ENCODE measurements at regions of chr2 and their contacts with region 1.

Region 1: DNA sequence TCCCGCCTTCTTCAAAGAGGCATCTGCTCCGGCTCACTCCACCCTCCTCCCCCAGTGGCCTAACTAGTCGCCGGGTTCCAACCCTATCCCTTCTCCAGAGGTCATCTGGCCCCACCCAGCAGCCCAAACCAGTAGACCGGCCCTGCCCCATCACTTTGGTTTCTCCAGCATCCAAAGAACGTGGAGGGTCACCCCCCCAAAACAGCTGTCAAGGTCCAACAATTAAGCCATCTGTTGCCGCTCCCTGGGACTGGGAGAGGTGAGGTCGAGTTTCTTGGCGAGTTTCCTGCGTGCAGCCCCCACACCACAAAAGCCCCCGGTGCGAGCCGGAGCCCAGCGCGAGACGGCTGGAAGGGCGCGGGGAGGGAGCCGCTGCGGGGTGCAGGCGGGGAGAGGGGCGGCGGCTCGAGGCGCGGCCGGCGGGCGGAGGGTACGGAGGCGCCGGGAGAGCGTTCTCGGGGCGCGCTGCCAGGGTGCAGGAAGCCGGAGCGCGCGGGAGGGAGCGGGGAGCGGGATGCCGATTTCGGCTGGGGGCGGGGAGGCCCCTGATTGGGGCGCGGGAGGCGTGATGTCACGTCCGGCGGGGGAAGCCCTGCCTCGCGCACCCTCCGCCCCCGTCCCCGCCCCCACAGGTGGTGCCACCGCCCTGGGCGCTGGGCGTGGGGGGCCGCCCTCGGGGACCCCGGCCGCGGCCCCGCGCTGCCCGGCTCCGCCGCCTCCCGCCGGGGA is 571 bp upstream of the GPC1 start:
- DNase-seq: peak; percentile 93
- H3K4me3 ChIP-seq: peak overlapping the region; percentile 62
- H3K27ac ChIP-seq: peak overlapping the region; percentile 63
- H3K4me1 ChIP-seq: peaks cover 15% of the 10 kb centered on the region
- H3K27me3 ChIP-seq: peaks cover 15% of the 10 kb centered on the region
- CTCF ChIP-seq: no peak

Region 2: GRCh38 chr2:240060977-240061591 is 373.8 kb before region 1 on chr2:
- CTCF ChIA-PET with region 1: no interaction called
- POLR2A ChIA-PET with region 1: no interaction called
- intact Hi-C with region 1: loop called (anchors 5 kb)
- DNase-seq: peak; percentile 71
- H3K4me3 ChIP-seq: no peak overlapping the region
- H3K27ac ChIP-seq: no peak overlapping the region
- H3K4me1 ChIP-seq: no peaks in the 10 kb centered on the region
- H3K27me3 ChIP-seq: peaks cover 68% of the 10 kb centered on the region
- CTCF ChIP-seq: peak; percentile 68

Region 3: DNA sequence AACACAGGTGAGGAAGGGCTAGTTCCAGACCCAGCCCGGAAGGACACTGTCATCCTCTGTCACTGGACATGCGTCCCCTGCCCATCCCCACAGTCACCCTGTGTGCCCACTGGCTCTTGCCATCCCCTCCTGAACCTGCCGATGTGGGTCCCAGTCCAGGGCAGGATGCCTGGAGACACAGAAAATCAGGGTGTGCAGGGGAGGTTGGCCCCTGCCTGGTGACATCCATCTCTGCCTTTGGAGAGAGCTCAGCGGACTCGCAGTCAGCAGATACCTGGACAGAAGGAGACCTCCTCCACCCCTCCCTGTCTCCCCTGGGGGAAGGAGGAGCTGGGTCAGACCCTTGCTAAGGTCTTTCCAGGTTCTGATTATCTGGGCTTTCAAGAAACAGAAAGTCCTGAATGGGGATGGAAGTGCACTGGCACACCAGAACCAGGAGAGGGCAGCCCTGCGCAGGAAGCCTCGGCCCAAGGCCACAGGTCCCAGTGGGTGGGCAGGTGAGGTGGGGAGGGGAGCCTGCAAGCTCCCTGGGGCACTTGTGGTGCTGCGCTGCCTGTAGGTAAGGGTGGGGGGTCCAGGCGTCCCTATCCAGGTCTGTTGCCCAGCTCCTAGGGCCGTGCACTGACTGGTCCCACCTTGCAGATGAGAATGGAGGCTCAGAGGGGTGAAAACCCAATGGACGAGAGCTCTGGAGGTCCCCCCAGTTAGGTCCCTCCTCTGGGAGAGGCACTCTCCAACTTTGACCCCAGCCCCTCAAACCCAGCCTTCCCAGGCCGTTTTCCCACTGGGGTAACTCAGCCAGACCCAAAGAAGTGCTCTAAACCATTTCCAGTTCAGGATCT is 284.7 kb before region 1 on chr2:
- CTCF ChIA-PET with region 1: no interaction called
- POLR2A ChIA-PET with region 1: no interaction called
- intact Hi-C with region 1: loop called (anchors 1 kb)
- DNase-seq: peak; percentile 36
- H3K4me3 ChIP-seq: no peak overlapping the region
- H3K27ac ChIP-seq: no peak overlapping the region
- H3K4me1 ChIP-seq: no peaks in the 10 kb centered on the region
- H3K27me3 ChIP-seq: peaks cover 18% of the 10 kb centered on the region
- CTCF ChIP-seq: peak; percentile 75

Region 4: DNA sequence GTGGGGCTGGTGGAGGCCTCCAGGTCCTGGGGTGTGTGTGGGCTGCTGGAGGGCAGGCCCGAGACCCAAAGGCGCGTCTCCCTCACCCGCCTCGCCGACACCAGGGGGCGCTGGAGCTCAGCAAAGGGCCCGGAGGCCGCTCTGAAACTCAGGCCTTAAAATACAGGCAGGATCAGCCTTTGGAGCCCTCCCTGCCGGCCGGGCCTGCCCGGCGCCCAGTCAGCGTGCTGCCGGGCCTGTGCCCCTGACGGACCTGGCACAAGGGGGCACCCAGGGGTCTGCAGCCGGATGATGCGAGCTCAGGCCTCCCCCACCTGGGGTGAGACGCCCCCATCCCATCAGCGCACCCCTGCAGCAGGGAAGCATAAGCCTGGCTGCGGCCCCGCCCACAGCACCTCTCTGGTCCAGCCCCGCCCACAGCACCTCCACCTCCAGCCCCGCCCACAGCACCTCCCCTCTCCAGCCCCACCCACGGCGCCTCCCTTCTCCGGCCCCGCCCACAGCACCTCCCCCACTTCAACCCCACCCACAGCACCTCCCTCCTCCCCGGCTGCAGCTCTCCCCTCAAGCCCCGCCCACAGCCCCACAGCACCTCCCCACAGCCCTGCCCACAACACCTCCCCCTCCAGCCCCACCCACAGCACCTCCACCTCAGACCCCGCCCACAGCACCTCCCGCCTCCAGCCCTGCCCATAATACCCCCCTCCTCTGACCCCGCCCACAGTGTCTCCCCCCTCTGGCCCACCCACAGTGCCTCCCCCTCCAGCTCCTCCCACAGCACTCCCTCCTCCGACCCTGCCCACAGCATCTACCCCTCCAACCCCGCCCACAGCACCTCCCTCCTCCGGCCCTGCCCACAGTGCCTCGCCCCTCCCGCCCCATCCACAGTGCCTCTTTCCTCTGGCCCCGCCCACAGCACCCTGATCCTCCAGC is 201.7 kb before region 1 on chr2:
- CTCF ChIA-PET with region 1: no interaction called
- POLR2A ChIA-PET with region 1: no interaction called
- intact Hi-C with region 1: loop called (anchors 1 kb)
- DNase-seq: peak; percentile 89
- H3K4me3 ChIP-seq: peak overlapping the region; percentile 40
- H3K27ac ChIP-seq: peak overlapping the region; percentile 2
- H3K4me1 ChIP-seq: no peaks in the 10 kb centered on the region
- H3K27me3 ChIP-seq: no peaks in the 10 kb centered on the region
- CTCF ChIP-seq: peak; percentile 89

Measured in A673 (cell line).